Endothelial cell of umbilical vein (primary cell): ENCODE measurements at regions of chr12 and their contacts with region 1.

Region 1: DNA sequence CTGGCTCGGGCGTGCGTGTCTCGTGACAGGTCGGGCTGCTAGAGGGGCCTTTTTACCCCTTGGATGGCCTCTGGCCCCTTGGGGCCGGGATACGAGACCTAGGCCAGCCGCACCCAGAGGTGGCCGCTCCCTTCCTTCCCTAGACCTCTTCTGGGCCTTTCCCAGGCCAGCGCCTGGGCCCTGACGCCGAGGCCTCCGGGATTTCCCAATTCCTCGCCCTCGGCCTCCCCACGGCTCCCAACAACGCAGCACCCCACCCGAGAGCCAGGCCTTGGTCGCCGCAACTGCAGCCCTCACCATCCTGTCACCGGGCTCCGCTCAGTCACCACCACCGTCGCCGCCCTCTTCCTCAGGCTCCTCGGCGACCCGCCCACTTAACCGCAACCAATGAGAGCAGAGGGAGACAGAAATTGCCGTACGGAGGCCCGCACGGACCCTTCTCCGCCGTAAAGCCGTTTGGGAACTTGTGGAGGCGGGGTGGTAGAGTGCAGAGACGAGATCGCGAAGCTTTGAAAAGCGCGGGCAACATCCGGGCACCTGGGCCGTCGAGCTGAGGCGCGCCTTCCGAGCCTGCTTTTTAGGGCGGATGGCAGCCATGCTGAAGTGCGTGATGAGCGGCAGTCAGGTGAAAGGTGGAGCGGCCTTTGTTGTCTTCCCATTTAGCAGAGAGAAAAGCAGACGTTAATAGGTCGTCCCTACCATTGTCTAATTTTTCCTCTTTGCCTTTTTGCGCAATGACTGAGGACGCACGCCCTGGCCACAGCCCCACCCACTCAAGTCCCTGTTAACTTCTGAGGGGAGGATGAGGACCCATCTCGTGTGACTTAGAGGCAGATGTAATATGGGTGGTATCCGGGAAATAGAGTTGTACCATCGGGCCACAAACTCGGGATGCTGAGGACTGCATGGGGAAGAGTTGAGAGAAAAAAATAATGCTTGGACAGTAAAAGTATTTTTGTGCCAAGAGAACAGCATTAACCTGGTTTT is at the starts of genes RAD9B and VPS29:
- DNase-seq: peak; percentile 99
- H3K4me3 ChIP-seq: peak within 1 kb of the TSS; percentile 58 to 94 (median 80)
- H3K27ac ChIP-seq: peak within 1 kb of the TSS; percentile 68
- H3K4me1 ChIP-seq: peaks cover 13% of the 10 kb centered on the region
- H3K27me3 ChIP-seq: no peaks in the 10 kb centered on the region
- CTCF ChIP-seq: no peak
- POLR2A ChIP-seq: peak; percentile 86
- total RNA-seq, gene RAD9B: 0.15 TPM in 1 of 2 replicates, not detected in the other
- total RNA-seq, gene VPS29: 147 and 155 TPM in 2 replicates

Region 2: DNA sequence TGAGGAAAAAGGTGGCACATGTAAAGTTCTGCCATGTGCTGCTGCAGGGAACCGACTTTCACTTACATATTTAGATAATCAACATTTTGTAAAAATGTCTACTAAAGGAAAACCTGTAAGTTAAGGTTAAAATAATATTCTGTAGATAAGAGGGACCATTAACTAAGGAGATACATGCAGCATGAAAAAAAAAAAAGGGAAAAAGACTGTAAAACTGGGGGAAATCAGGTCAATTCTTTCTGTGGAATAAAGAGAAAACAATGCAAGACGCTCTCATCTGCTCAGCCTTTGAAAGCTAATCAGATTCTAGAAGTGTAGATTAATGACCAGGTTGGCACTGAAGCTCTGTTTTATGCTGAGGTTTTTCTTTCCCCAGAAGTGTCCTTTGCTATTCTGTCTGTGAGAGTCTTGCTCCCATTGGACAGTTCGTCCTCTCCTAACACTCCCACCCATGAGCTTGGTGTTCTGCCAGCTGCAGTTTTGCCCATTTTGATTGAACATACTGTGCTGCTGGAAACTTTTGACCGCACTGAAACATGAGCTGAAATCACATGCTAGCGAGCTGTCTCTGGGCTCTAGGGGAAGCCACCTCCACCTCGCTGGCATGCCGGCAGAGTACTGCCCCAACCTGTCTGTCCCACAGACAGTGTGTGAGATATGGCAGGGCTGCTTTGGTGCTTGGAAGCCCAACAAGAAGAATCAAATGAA is 41.4 kb after region 1 on chr12:
- CTCF ChIA-PET with region 1: no interaction called
- POLR2A ChIA-PET with region 1: no interaction called
- dilution Hi-C with region 1: no loop called
- intact Hi-C with region 1: loop called (anchors 1 kb)
- DNase-seq: peak; percentile 88
- H3K4me3 ChIP-seq: no peak overlapping the region
- H3K27ac ChIP-seq: peak overlapping the region; percentile 25
- H3K4me1 ChIP-seq: peaks cover 61% of the 10 kb centered on the region
- H3K27me3 ChIP-seq: no peaks in the 10 kb centered on the region
- CTCF ChIP-seq: no peak
- POLR2A ChIP-seq: peak; percentile 22

Region 3: DNA sequence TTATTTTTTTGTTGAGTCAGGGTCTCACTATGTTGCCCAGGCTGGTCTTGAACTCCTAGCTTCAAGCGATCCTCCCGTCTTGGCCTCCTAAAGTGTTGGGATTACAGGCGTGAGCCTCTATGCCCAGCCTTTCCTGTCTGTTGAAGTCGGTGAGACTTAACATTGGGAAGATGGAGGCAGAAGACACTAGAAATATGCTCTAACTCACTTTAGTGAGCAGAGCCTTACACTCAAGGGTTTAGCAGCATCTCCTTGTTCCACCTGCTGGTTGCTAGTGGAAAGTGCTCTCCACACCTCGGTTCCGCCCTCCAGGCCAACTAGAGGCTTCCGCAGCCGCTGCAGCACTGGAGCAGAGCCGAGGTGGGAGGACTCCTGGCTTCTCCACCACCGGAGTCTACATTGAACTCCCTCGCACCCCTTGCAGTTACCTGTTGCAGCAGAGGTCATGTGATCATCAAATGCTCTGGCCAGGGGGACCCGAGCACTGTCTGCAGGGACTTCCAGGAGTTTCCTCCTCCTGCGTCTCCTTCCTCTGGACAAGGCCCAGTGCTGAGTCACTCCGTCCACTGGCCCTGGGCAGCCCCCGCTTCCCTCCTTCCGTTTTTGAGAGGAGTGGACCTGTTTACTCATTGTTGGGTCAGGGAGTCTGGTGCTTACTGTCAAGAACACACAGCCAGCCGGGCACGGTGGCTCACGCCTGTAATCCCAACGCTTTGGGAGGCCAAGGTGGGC is 196.3 kb after region 1 on chr12:
- CTCF ChIA-PET with region 1: no interaction called
- POLR2A ChIA-PET with region 1: no interaction called
- dilution Hi-C with region 1: no loop called
- intact Hi-C with region 1: loop called (anchors 5 kb)
- DNase-seq: peak; percentile 92
- H3K4me3 ChIP-seq: no peak overlapping the region
- H3K27ac ChIP-seq: peak overlapping the region; percentile 36
- H3K4me1 ChIP-seq: peaks cover 5% of the 10 kb centered on the region
- H3K27me3 ChIP-seq: no peaks in the 10 kb centered on the region
- CTCF ChIP-seq: peak; percentile 67 to 81
- POLR2A ChIP-seq: peak; percentile 24